CD8-positive, alpha-beta memory T cell (primary cell): ENCODE measurements at regions of chr11 and their contacts with region 1.

Region 1: DNA sequence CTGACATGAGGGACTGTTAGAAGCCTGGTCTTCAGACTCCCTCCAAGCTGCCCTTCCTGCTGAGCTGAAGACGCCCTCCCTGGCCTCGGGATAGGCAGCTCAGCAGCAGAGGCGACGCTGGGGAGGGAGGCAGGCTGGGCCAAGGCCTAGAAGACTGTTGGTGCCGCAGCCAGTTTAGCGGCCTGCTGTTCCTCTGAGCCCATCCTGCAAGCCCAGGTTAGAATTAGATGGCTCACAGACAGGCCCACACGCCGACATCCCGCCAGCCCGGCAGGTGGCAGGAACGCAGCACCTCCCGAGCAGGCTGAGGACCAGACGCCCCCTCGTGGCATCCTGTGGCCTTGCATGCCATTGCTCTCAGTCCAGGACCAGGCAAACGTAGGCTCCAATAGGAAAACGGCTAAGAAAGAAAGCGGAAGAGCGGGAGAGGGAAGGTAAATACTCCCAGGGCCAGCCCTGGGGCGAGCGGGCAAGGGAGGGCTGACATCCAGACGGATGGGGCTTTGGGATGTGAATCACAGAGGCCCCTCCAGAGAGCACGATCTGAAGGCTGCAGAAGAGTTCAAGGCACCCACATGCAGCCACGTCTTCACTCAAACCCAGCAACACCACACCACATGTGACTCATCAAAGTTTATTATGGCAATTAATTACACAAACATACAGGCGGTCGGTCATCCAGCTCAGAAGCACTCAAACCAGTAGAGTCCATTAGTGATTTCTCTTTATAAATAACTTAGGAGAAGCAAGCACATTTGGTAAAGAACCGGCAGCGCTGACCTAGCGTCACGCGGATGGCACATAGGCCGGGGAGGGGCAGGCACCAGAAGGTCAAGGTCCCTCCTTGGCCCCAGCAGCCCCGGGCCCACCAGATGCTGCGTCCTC is 27.6 kb downstream of the CD5 start:
- DNase-seq: peak; percentile 81 to 91 (median 86)
- H3K4me3 ChIP-seq: no peak overlapping the region
- H3K4me3 Mint-ChIP-seq: peak overlapping the region in 5 of 7 donors; percentile 9 to 70 (median 37)
- H3K27ac ChIP-seq: no peak overlapping the region
- H3K27ac Mint-ChIP-seq: peak overlapping the region; percentile 1 to 94 (median 62)
- H3K4me1 ChIP-seq: peaks cover 19% of the 10 kb centered on the region
- H3K4me1 Mint-ChIP-seq: peaks cover 5 to 20% (median 11%) of the 10 kb centered on the region in 3 donors
- H3K27me3 ChIP-seq: no peaks in the 10 kb centered on the region
- H3K27me3 Mint-ChIP-seq: no peaks in the 10 kb centered on the region

Region 2: DNA sequence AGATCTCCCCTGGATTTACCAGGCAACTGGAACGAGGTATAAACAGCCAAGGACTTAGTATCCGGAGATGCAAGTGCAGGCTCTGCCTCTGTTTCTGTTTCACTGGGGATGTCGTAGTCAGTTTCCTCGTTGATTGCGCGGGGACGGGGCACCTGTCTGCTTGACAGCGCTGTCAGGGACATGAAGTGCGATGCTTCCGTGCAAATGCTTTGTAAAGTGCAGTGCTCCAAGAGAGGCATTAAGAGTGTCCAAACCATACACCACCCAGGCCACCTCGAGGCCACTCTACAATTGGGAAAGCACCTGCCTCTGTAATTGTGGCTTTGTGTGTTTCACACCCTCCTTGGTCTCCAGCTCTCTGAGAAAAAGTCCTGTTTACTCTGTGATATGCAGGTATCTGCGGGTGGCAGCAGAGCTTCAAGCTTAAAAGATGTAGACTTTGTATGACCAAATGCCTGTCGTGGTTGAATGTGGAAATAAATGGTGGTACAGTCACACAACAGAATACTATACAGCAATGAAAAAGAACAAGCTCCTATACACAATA is 46.2 kb before region 1 on chr11:
- CTCF ChIA-PET with region 1: interaction called, 12 read pairs
- POLR2A ChIA-PET with region 1: interaction called, 4 read pairs
- DNase-seq: peak; percentile 51 to 87 (median 67)
- H3K4me3 ChIP-seq: peak overlapping the region; percentile 57
- H3K4me3 Mint-ChIP-seq: peak overlapping the region; percentile 26 to 87 (median 75)
- H3K27ac ChIP-seq: peak overlapping the region; percentile 66
- H3K27ac Mint-ChIP-seq: peak overlapping the region; percentile 94 to 99 (median 96)
- H3K4me1 ChIP-seq: peaks cover 50% of the 10 kb centered on the region
- H3K4me1 Mint-ChIP-seq: peaks cover 38 to 58% (median 52%) of the 10 kb centered on the region in 3 donors
- H3K27me3 ChIP-seq: no peaks in the 10 kb centered on the region
- H3K27me3 Mint-ChIP-seq: peaks cover 0 to 1% of the 10 kb centered on the region in 2 donors

Region 3: GRCh38 chr11:61111786-61112517 is 17.9 kb before region 1 on chr11:
- CTCF ChIA-PET with region 1: interaction called, 18 read pairs
- POLR2A ChIA-PET with region 1: interaction called, 4 read pairs
- DNase-seq: peak in 4 of 5 donors; percentile 32 to 70 (median 63)
- H3K4me3 ChIP-seq: peak overlapping the region; percentile 23
- H3K4me3 Mint-ChIP-seq: peak overlapping the region; percentile 38 to 84 (median 73)
- H3K27ac ChIP-seq: peak overlapping the region; percentile 44
- H3K27ac Mint-ChIP-seq: peak overlapping the region in 7 of 8 donors; percentile 73 to 97 (median 92)
- H3K4me1 ChIP-seq: peaks cover 95% of the 10 kb centered on the region
- H3K4me1 Mint-ChIP-seq: peaks cover 68 to 99% (median 97%) of the 10 kb centered on the region in 3 donors
- H3K27me3 ChIP-seq: no peaks in the 10 kb centered on the region
- H3K27me3 Mint-ChIP-seq: no peaks in the 10 kb centered on the region

Region 4: DNA sequence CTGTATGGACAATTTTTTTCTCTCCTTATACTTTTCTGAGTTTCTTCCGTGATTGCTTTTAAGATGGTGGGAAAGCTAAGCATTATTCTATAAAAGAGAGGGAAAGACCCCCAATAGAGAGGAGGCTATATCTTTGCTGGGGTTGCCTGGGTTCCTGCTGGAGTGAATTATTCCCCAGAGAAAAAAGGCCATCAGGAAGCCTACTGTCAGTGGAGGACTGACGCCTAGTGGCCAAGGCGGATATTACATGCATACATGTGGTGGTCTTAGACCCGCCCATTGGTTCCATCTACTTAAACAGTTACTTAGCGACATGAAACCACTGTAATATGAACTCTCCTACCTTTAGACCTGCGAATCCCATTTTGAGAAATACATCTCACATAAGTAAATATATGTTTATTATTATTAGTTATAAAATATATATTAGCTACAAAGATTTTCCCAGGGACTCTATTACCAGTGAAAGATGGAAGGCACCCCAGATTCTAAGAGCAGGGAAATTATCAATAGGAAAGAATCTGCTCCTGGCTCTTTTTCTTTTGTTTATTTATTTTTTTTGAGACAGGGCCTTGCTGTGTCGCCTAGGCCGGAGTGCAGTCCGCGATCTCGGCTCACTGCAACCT is 57.7 kb after region 1 on chr11:
- CTCF ChIA-PET with region 1: interaction called, 11 read pairs
- POLR2A ChIA-PET with region 1: no interaction called
- DNase-seq: peak; percentile 63 to 86 (median 71)
- H3K4me3 ChIP-seq: no peak overlapping the region
- H3K4me3 Mint-ChIP-seq: no peak overlapping the region
- H3K27ac ChIP-seq: no peak overlapping the region
- H3K27ac Mint-ChIP-seq: peak overlapping the region in 1 of 8 donors; percentile 73
- H3K4me1 ChIP-seq: no peaks in the 10 kb centered on the region
- H3K4me1 Mint-ChIP-seq: no peaks in the 10 kb centered on the region
- H3K27me3 ChIP-seq: no peaks in the 10 kb centered on the region
- H3K27me3 Mint-ChIP-seq: peaks cover 0 to 17% of the 10 kb centered on the region in 2 donors

Region 5: GRCh38 chr11:61266602-61267001 is 136.7 kb after region 1 on chr11:
- CTCF ChIA-PET with region 1: no interaction called
- POLR2A ChIA-PET with region 1: no interaction called
- DNase-seq: no peak
- H3K4me3 ChIP-seq: no peak overlapping the region
- H3K4me3 Mint-ChIP-seq: no peak overlapping the region
- H3K27ac ChIP-seq: no peak overlapping the region
- H3K27ac Mint-ChIP-seq: no peak overlapping the region
- H3K4me1 ChIP-seq: no peaks in the 10 kb centered on the region
- H3K4me1 Mint-ChIP-seq: no peaks in the 10 kb centered on the region
- H3K27me3 ChIP-seq: no peaks in the 10 kb centered on the region
- H3K27me3 Mint-ChIP-seq: no peaks in the 10 kb centered on the region